Mammary epithelial cell (primary cell): ENCODE measurements at regions of chr5 and their contacts with region 1.

Region 1: DNA sequence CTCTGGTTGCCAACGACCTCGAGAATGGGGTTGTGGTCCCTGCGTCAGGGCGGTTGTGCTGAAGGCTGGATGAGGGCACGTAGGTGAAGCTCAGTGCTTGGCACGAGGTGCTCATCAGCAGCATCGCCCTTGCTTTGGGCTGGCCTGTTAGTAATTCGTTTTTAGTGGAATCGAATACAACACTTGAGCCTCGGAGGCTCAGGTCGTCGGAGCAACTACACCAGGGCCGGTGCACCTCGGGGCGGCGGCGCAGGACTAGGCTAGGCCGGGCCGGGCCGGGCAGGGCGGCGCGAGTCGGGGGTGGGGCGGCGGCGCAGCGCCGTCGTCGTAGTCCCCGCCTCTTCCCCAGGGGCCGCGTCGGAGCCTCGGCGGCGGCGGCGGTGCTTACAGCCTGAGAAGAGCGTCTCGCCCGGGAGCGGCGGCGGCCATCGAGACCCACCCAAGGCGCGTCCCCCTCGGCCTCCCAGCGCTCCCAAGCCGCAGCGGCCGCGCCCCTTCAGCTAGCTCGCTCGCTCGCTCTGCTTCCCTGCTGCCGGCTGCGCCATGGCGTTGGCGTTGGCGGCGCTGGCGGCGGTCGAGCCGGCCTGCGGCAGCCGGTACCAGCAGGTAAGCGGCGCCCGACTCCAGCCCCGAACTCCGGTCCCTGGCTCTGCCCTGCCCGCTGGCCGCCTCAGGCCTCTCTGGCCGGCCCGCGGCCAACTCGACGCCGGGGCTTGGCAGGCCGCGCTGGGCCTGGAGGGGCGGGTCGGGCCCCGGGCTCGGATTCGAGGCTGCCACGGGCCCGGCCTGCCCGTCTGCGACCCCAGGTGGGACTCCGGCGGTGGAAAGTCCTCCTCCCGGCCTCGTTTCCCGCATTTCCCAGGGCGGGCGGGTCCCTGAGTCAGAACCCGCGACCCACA is at the start of gene NDFIP1:
- DNase-seq: peak; percentile 83
- H3K4me3 ChIP-seq: peak within 1 kb of the TSS; percentile 74 to 84 (median 78)
- H3K27ac ChIP-seq: peak within 1 kb of the TSS; percentile 80
- H3K4me1 ChIP-seq: peaks cover 14% of the 10 kb centered on the region
- H3K27me3 ChIP-seq: no peaks in the 10 kb centered on the region
- CTCF ChIP-seq: no peak
- total RNA-seq, gene NDFIP1: 40.4 to 120 TPM

Region 2: DNA sequence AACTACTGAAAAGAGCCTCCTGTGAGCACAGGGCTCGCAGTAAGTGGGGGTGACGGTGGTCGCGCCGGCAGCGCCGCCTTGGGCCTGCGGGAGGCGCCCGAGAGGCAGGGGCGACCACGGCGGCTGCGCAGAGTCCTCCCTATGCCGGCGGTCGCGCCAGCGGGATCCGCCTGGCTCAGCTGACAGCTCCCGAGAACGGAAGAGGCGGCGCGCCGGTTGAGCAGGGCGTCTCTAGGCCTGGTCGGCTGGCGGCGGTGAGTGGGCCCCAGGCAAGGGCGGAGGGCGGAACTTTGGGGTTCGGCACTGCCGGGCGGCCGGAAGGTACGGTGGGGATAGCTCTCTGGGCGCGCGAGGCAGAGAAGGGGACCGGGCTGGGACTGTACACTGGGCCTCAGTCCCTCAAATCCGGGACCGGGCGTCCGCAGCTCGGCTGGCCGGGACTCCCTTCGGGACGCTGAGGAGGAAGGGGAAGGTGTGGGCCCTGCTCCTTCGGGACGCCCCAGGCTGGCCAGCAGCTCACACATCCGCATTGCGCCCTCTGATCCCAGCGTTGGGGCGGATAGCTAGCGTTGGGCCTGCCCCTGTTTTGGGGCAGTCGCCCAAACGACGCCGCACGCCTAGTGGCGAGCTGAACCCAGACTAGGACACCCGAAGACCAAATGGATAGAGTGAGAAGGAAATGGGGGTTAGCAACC is 139.6 kb before region 1 on chr5 and contains the start of gene RNF14:
- CTCF ChIA-PET with region 1: no interaction called
- dilution Hi-C with region 1: no loop called
- in situ Hi-C with region 1: no loop called
- intact Hi-C with region 1: no loop called
- DNase-seq: peak; percentile 93
- H3K4me3 ChIP-seq: peak within 1 kb of the TSS; percentile 48 to 87 (median 67)
- H3K27ac ChIP-seq: peak within 1 kb of the TSS; percentile 77
- H3K4me1 ChIP-seq: peaks cover 16% of the 10 kb centered on the region
- H3K27me3 ChIP-seq: no peaks in the 10 kb centered on the region
- CTCF ChIP-seq: peak; percentile 72 to 88
- total RNA-seq, gene RNF14: 60.4 to 93.7 TPM

Region 3: GRCh38 chr5:142024771-142025304 is 83.8 kb before region 1 on chr5:
- CTCF ChIA-PET with region 1: no interaction called
- dilution Hi-C with region 1: no loop called
- in situ Hi-C with region 1: no loop called
- intact Hi-C with region 1: loop called (anchors 2 kb)
- DNase-seq: peak; percentile 78
- H3K4me3 ChIP-seq: peak overlapping the region; percentile 20 to 35 (median 26)
- H3K27ac ChIP-seq: peak overlapping the region; percentile 20
- H3K4me1 ChIP-seq: peaks cover 7% of the 10 kb centered on the region
- H3K27me3 ChIP-seq: no peaks in the 10 kb centered on the region
- CTCF ChIP-seq: no peak

Region 4: GRCh38 chr5:142057697-142058056 is 51.0 kb before region 1 on chr5:
- CTCF ChIA-PET with region 1: no interaction called
- dilution Hi-C with region 1: no loop called
- in situ Hi-C with region 1: no loop called
- intact Hi-C with region 1: loop called (anchors 1 kb)
- DNase-seq: peak; percentile 78
- H3K4me3 ChIP-seq: no peak overlapping the region
- H3K27ac ChIP-seq: peak overlapping the region; percentile 83
- H3K4me1 ChIP-seq: peaks cover 31% of the 10 kb centered on the region
- H3K27me3 ChIP-seq: no peaks in the 10 kb centered on the region
- CTCF ChIP-seq: no peak